ENCODE measurements at regions of chr12 and their contacts with region 1.

Region 1: GRCh38 chr12:105235732-105236476 is at the start of gene APPL2:
- DNase-seq: peak; percentile 52 to 81 (median 71)
- ATAC-seq: peak; percentile 86
- H3K4me3 ChIP-seq: peak within 1 kb of the TSS; percentile 71
- H3K4me3 Mint-ChIP-seq: peak within 1 kb of the TSS in 9 of 10 donors; percentile 89 to 95 (median 93)
- H3K27ac ChIP-seq: peak within 1 kb of the TSS; percentile 78
- H3K27ac Mint-ChIP-seq: peak within 1 kb of the TSS; percentile 86 to 96 (median 91)
- H3K4me1 ChIP-seq: peaks cover 25 to 39% of the 10 kb centered on the region in 2 donors
- H3K4me1 Mint-ChIP-seq: peaks cover 42 to 54% (median 48%) of the 10 kb centered on the region in 7 donors
- H3K27me3 ChIP-seq: no peaks in the 10 kb centered on the region
- H3K27me3 Mint-ChIP-seq: peaks cover 0 to 3% (median 0%) of the 10 kb centered on the region in 5 donors
- total RNA-seq, gene APPL2: 31.6 to 74.5 (median 58.3) TPM

Region 2: DNA sequence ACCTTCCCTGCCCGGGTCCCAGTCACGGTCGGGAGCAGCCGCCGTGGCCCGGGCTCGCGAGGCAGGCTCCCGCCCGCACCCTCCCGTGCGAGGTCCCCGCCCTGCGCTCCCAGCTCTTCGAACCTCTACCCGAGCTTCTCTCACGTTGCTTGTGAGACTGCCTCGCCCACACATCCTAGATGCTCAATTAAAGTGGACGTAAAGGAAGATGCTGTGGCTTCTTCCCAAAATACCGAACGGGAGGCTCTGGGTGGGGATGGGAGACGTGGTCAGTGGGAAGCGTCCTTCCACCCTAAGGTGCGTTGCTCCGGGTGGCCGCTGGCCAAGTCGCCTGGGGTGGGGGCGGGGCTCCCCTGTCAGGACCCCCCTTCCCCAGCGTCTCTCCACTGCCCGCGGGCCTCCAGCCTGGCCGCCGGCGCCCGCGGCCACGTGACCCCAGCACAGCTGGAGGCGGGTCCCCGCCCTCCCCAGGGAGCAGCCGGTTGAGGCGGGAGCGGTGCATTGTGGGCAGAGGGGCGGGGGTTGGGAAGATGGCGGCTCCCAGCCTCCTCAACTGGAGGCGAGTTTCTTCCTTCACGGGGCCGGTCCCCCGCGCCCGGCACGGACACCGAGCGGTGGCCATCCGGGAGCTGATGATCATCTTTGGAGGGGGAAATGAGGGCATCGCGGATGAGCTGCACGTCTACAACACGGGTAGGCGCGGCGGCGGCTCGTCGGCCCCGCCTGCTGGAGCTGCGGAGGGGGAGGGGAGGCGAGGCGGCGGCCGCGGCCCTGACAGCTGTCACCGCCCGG is 1171.7 kb before region 1 on chr12 and contains the start of gene HCFC2:
- CTCF ChIA-PET with region 1: no interaction called
- POLR2A ChIA-PET with region 1: no interaction called
- intact Hi-C with region 1: loop called in 1 of 2 experiments (anchors 5 kb)
- DNase-seq: peak; percentile 77 to 93 (median 83)
- ATAC-seq: peak; percentile 99
- H3K4me3 ChIP-seq: peak within 1 kb of the TSS; percentile 95
- H3K4me3 Mint-ChIP-seq: peak within 1 kb of the TSS; percentile 88 to 97 (median 94)
- H3K27ac ChIP-seq: peak within 1 kb of the TSS; percentile 79
- H3K27ac Mint-ChIP-seq: peak within 1 kb of the TSS; percentile 71 to 96 (median 90)
- H3K4me1 ChIP-seq: peaks cover 5 to 9% of the 10 kb centered on the region in 2 donors
- H3K4me1 Mint-ChIP-seq: peaks cover 13 to 31% (median 21%) of the 10 kb centered on the region in 7 donors
- H3K27me3 ChIP-seq: no peaks in the 10 kb centered on the region
- H3K27me3 Mint-ChIP-seq: peaks cover 5 to 27% (median 13%) of the 10 kb centered on the region in 5 donors
- total RNA-seq, gene HCFC2: 11.4 to 20.2 (median 16.2) TPM

Region 3: GRCh38 chr12:104137913-104138796 is 1097.7 kb before region 1 on chr12 and contains the start of gene NFYB:
- CTCF ChIA-PET with region 1: interaction called, 5 read pairs
- POLR2A ChIA-PET with region 1: no interaction called
- intact Hi-C with region 1: loop called in 1 of 2 experiments (anchors 2 kb)
- DNase-seq: peak; percentile 90 to 96 (median 94)
- ATAC-seq: peak; percentile 97
- H3K4me3 ChIP-seq: peak within 1 kb of the TSS; percentile 69
- H3K4me3 Mint-ChIP-seq: peak within 1 kb of the TSS; percentile 81 to 93 (median 90)
- H3K27ac ChIP-seq: peak within 1 kb of the TSS; percentile 72
- H3K27ac Mint-ChIP-seq: peak within 1 kb of the TSS; percentile 71 to 95 (median 89)
- H3K4me1 ChIP-seq: peaks cover 10 to 23% of the 10 kb centered on the region in 2 donors
- H3K4me1 Mint-ChIP-seq: peaks cover 0 to 22% (median 9%) of the 10 kb centered on the region in 7 donors
- H3K27me3 ChIP-seq: no peaks in the 10 kb centered on the region
- H3K27me3 Mint-ChIP-seq: peaks cover 0 to 24% (median 0%) of the 10 kb centered on the region in 5 donors
- total RNA-seq, gene NFYB: 11.6 to 25.9 (median 24.4) TPM

Region 4: GRCh38 chr12:105401198-105401597 is 165.3 kb after region 1 on chr12:
- CTCF ChIA-PET with region 1: no interaction called
- POLR2A ChIA-PET with region 1: no interaction called
- intact Hi-C with region 1: no loop called
- DNase-seq: no peak
- ATAC-seq: no peak
- H3K4me3 ChIP-seq: no peak overlapping the region
- H3K4me3 Mint-ChIP-seq: no peak overlapping the region
- H3K27ac ChIP-seq: no peak overlapping the region
- H3K27ac Mint-ChIP-seq: no peak overlapping the region
- H3K4me1 ChIP-seq: no peaks in the 10 kb centered on the region
- H3K4me1 Mint-ChIP-seq: no peaks in the 10 kb centered on the region
- H3K27me3 ChIP-seq: no peaks in the 10 kb centered on the region
- H3K27me3 Mint-ChIP-seq: no peaks in the 10 kb centered on the region

Region 5: DNA sequence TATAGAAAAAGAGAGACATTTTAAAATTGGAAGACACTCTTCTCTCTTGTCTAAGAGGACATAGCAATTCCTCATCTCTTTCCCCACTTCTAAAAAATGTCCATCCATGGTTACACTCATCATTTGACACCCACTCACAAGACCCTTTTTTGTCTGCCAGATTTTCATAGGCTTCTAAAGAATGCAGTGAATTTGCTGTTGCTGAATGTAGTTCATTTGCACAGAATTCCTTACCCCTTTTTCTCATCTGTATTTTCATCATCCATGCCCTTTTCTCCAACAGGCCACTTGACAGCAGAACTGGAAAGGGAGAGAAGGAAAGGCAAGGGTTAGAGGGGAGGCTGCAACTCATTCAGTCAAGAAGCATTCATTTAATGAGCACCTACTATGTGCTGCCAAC is 774.8 kb after region 1 on chr12:
- CTCF ChIA-PET with region 1: no interaction called
- POLR2A ChIA-PET with region 1: no interaction called
- intact Hi-C with region 1: no loop called
- DNase-seq: no peak
- ATAC-seq: no peak
- H3K4me3 ChIP-seq: no peak overlapping the region
- H3K4me3 Mint-ChIP-seq: no peak overlapping the region
- H3K27ac ChIP-seq: no peak overlapping the region
- H3K27ac Mint-ChIP-seq: no peak overlapping the region
- H3K4me1 ChIP-seq: no peaks in the 10 kb centered on the region
- H3K4me1 Mint-ChIP-seq: no peaks in the 10 kb centered on the region
- H3K27me3 ChIP-seq: peaks cover 0 to 3% of the 10 kb centered on the region in 2 donors
- H3K27me3 Mint-ChIP-seq: peaks cover under 1 to 24% (median 11%) of the 10 kb centered on the region in 5 donors

Region 6: DNA sequence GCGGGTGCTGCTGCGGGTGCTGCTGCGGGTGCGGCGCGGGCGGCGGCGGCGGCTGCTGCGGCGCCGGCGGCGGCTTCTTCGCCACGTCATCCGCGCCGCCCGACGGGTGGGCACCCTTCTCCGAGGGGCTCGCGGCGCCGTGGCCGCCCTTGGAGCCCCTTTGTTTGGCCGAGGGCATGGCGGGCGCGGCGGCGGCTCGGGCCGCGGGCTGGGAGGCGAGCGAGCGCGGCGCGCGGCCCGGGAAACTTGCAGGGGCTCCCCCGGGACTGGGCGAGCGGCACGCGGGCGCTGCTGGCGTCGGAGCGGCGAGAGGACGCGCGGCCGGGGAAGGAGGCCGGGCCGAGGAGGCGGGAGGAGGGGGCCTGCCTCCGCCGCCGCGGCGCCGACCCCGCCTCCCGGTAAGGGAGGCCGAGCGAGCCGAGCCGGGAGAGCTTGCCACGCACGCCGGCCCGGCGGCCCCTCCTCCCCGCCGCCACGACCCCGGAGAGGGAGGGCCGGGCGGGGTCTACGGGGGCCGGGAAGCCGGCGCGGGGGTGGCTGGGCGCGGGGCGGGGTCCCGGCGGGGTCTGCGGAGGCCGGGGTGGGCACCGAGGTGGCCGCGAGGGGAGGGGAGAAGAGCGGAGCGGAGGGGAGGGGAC is 1011.9 kb after region 1 on chr12 and contains the start of gene CKAP4:
- CTCF ChIA-PET with region 1: no interaction called
- POLR2A ChIA-PET with region 1: no interaction called
- intact Hi-C with region 1: loop called in 1 of 2 experiments (anchors 10 kb)
- DNase-seq: peak; percentile 45 to 65 (median 55)
- ATAC-seq: peak; percentile 59
- H3K4me3 ChIP-seq: peak within 1 kb of the TSS; percentile 69
- H3K4me3 Mint-ChIP-seq: peak within 1 kb of the TSS; percentile 81 to 92 (median 86)
- H3K27ac ChIP-seq: peak within 1 kb of the TSS; percentile 80
- H3K27ac Mint-ChIP-seq: peak within 1 kb of the TSS; percentile 58 to 98 (median 94)
- H3K4me1 ChIP-seq: peaks cover 17 to 22% of the 10 kb centered on the region in 2 donors
- H3K4me1 Mint-ChIP-seq: peaks cover 13 to 37% (median 31%) of the 10 kb centered on the region in 7 donors
- H3K27me3 ChIP-seq: no peaks in the 10 kb centered on the region
- H3K27me3 Mint-ChIP-seq: peaks cover 0 to 19% (median 0%) of the 10 kb centered on the region in 5 donors
- total RNA-seq, gene CKAP4: 4.3 to 27.2 (median 13.0) TPM